Gastrocnemius medialis (tissue), 4 donors: ENCODE measurements at regions of chr11 and their contacts with region 1.

Region 1: GRCh38 chr11:36509694-36510566 is at the start of gene TRAF6:
- DNase-seq: peak; percentile 73 to 76
- ATAC-seq: peak; percentile 91
- H3K4me3 ChIP-seq: peak within 1 kb of the TSS; percentile 73 to 97 (median 86)
- H3K27ac ChIP-seq: peak within 1 kb of the TSS; percentile 88 to 94 (median 92)
- H3K4me1 ChIP-seq: peaks cover 16 to 20% of the 10 kb centered on the region in 2 donors
- H3K27me3 ChIP-seq: no peaks in the 10 kb centered on the region
- CTCF ChIP-seq: peak; percentile 78 to 93 (median 91)
- POLR2A ChIP-seq: peak; percentile 88 to 89
- total RNA-seq, gene TRAF6: 9.8 to 14.4 (median 11.3) TPM

Region 2: DNA sequence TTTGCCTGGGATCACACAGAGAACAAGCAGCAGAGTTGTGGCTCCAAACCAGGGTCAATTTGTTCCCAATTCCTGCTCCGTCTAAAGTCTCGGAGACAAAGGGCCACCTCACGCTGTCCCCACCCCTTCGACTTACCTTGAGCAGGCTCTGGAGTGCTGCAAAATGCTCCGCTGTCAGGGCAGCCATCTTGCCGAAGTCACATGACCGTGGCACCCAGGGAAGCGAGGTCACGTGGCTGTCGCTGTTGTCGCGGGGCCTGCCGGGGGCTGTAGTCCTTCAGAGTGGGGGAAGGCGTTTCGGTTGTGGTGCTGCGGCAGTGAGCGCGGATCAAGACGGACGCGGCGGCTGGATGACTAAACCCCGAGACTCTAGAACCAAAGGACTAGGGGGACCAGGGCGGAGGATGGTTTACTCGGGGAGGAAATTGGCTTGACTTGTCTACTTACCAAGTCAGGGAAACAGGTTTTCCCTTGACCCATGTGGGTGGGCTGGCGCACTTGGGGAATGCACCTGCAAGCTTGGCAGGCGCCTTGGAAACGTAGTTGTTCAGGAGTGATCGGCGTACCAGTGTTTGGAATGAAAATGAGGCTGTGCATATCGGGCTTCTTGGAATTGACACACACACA is 220.6 kb before region 1 on chr11 and contains the start of gene COMMD9:
- in situ Hi-C with region 1: loop called in 1 of 4 experiments (anchors 25 kb)
- intact Hi-C with region 1: no loop called
- DNase-seq: peak; percentile 92
- ATAC-seq: peak; percentile 96 to 99
- H3K4me3 ChIP-seq: peak within 1 kb of the TSS; percentile 70 to 86 (median 79)
- H3K27ac ChIP-seq: peak within 1 kb of the TSS; percentile 63 to 80 (median 68)
- H3K4me1 ChIP-seq: peaks cover 13 to 15% of the 10 kb centered on the region in 2 donors
- H3K27me3 ChIP-seq: no peaks in the 10 kb centered on the region
- CTCF ChIP-seq: no peak
- POLR2A ChIP-seq: peak in 1 of 2 donors; percentile 28
- total RNA-seq, gene COMMD9: 51.8 to 68.6 (median 57.7) TPM

Region 3: GRCh38 chr11:36469063-36469462 is 40.9 kb before region 1 on chr11:
- in situ Hi-C with region 1: no loop called
- intact Hi-C with region 1: no loop called
- DNase-seq: no peak
- ATAC-seq: no peak
- H3K4me3 ChIP-seq: no peak overlapping the region
- H3K27ac ChIP-seq: no peak overlapping the region
- H3K4me1 ChIP-seq: peaks cover 17 to 22% of the 10 kb centered on the region in 2 donors
- H3K27me3 ChIP-seq: no peaks in the 10 kb centered on the region
- CTCF ChIP-seq: no peak
- POLR2A ChIP-seq: no peak

Region 4: DNA sequence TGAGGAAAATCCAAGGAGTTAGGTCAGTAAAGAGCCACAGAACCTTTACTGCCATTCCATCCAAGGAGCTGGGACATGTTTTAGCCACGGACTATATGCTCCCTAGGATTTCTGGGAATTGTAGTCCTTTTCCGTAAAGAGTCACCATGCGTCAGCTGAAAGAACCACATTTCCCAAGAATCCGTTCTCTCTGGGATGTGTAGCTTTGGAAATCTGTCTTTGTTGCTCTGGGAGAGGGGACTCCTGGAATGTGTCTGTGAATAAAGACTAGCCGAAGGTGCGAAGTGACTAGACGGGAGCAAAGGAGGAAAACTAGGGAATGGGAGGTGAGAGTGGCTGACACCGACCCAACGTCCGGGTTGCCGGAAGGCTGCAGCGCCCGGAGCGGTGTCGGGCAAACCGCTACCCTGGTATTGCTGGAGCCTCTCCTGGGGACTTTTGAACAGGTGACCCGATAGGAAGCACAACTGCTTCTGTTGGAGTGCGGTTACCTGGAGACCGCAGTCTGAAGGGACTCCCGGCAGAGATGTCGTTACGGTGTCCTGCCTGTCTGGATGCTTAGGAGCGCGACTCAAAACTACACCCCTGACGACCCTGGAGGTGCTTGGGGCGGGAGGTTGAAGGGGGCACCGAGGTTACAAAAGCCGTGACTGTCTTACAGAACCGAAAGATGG is 84.5 kb after region 1 on chr11 and contains the start of gene IFTAP:
- in situ Hi-C with region 1: no loop called
- intact Hi-C with region 1: loop called (anchors 2 kb)
- DNase-seq: peak; percentile 49 to 56
- ATAC-seq: peak; percentile 100
- H3K4me3 ChIP-seq: peak within 1 kb of the TSS; percentile 66 to 83 (median 81)
- H3K27ac ChIP-seq: peak within 1 kb of the TSS; percentile 75 to 81 (median 78)
- H3K4me1 ChIP-seq: peaks cover 13% of the 10 kb centered on the region in 2 donors
- H3K27me3 ChIP-seq: peaks cover 0 to 8% (median 5%) of the 10 kb centered on the region in 3 donors
- CTCF ChIP-seq: no peak
- POLR2A ChIP-seq: no peak
- total RNA-seq, gene IFTAP: 22.1 to 35.3 (median 29.5) TPM